Panc1 (cell line): ENCODE measurements at regions of chr9 and their contacts with region 1.

Region 1: DNA sequence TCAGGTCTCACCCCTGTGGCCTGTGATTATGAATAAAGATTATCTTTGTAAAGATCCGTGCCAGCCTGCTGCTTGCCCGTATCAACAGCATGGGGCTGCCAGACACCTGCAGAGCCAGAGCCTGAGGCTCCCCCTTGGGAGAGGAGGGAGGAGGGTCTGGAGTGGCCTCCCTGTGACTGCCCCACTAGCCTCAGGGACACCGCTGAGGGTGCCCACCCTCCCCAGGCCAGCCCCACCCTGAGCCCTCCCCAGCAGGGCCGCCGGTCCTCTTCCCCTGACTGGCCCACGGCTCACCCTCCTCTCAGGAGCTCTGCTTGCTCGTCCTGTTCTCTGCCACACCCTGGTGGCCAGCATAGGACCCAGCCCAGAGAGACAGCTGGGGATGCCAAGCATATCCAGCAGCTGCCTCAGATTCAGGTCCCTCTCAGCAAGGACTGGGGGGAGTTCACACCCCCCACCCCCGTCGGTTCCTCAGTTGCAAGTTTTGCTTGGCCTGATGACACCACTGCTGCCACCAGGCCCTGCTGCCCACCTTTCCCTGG is 1.9 kb downstream of the SSNA1 start:
- DNase-seq: no peak
- ATAC-seq: peak; percentile 36; the same call in 1 of the 2 replicates
- H3K4me3 ChIP-seq: no peak overlapping the region
- H3K27ac ChIP-seq: no peak overlapping the region
- H3K4me1 ChIP-seq: peaks cover 37% of the 10 kb centered on the region
- H3K27me3 ChIP-seq: no peaks in the 10 kb centered on the region
- CTCF ChIP-seq: peak; percentile 52; the same call in 1 of the 2 replicates

Region 2: GRCh38 chr9:136655536-136656182 is 534.7 kb before region 1 on chr9:
- CTCF ChIA-PET with region 1: no interaction called
- POLR2A ChIA-PET with region 1: no interaction called
- in situ Hi-C with region 1: no loop called
- intact Hi-C with region 1: no loop called
- DNase-seq: no peak
- ATAC-seq: no peak
- H3K4me3 ChIP-seq: no peak overlapping the region
- H3K27ac ChIP-seq: no peak overlapping the region
- H3K4me1 ChIP-seq: no peaks in the 10 kb centered on the region; the same call in 1 of the 2 replicates
- H3K27me3 ChIP-seq: no peaks in the 10 kb centered on the region
- CTCF ChIP-seq: no peak

Region 3: DNA sequence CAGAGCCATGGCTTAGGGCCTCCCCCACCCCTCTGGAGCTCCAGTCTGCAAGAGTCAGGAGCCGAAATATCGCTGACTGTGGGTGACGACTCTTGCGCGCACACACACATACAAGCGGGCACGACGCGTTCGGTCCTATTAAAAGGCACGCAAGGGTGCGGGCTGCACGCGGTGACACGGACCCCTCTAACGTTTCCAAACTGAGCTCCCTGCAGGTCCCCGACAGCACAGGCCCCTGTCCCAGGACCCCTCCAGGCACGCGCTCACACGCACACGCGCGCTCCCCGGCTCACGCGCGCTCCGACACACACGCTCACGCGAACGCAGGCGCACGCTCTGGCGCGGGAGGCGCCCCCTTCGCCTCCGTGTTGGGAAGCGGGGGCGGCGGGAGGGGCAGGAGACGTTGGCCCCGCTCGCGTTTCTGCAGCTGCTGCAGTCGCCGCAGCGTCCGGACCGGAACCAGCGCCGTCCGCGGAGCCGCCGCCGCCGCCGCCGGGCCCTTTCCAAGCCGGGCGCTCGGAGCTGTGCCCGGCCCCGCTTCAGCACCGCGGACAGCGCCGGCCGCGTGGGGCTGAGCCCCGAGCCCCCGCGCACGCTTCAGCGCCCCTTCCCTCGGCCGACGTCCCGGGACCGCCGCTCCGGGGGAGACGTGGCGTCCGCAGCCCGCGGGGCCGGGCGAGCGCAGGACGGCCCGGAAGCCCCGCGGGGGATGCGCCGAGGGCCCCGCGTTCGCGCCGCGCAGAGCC is 51.5 kb before region 1 on chr9 and contains the start of gene GRIN1:
- CTCF ChIA-PET with region 1: no interaction called
- POLR2A ChIA-PET with region 1: no interaction called
- in situ Hi-C with region 1: no loop called
- intact Hi-C with region 1: no loop called
- DNase-seq: no peak
- ATAC-seq: no peak
- H3K4me3 ChIP-seq: no peak within 1 kb of the TSS
- H3K27ac ChIP-seq: no peak within 1 kb of the TSS
- H3K4me1 ChIP-seq: no peaks in the 10 kb centered on the region
- H3K27me3 ChIP-seq: no peaks in the 10 kb centered on the region
- CTCF ChIP-seq: no peak
- total RNA-seq, gene GRIN1: 4.9 TPM

Region 4: GRCh38 chr9:137172901-137173795 is 17.2 kb before region 1 on chr9:
- CTCF ChIA-PET with region 1: no interaction called
- POLR2A ChIA-PET with region 1: no interaction called
- in situ Hi-C with region 1: no loop called
- intact Hi-C with region 1: no loop called
- DNase-seq: no peak
- ATAC-seq: no peak
- H3K4me3 ChIP-seq: no peak overlapping the region
- H3K27ac ChIP-seq: no peak overlapping the region
- H3K4me1 ChIP-seq: peaks cover 6% of the 10 kb centered on the region
- H3K27me3 ChIP-seq: no peaks in the 10 kb centered on the region
- CTCF ChIP-seq: no peak

Region 5: GRCh38 chr9:137213160-137214060 is 23.0 kb after region 1 on chr9:
- CTCF ChIA-PET with region 1: interaction called, 10 read pairs
- POLR2A ChIA-PET with region 1: no interaction called
- in situ Hi-C with region 1: no loop called
- intact Hi-C with region 1: no loop called
- DNase-seq: no peak
- ATAC-seq: no peak
- H3K4me3 ChIP-seq: no peak overlapping the region
- H3K27ac ChIP-seq: no peak overlapping the region
- H3K4me1 ChIP-seq: peaks cover 8% of the 10 kb centered on the region
- H3K27me3 ChIP-seq: no peaks in the 10 kb centered on the region
- CTCF ChIP-seq: peak; percentile 69